CD4-positive, alpha-beta memory T cell (primary cell): ENCODE measurements at regions of chr6 and their contacts with region 1.

Region 1: GRCh38 chr6:33579828-33580714 is at the start of gene BAK1:
- DNase-seq: peak; percentile 78 to 89 (median 79)
- H3K4me3 ChIP-seq: peak within 1 kb of the TSS; percentile 88 to 98
- H3K4me3 Mint-ChIP-seq: peak within 1 kb of the TSS; percentile 93 to 100 (median 98)
- H3K27ac ChIP-seq: peak within 1 kb of the TSS; percentile 90
- H3K27ac Mint-ChIP-seq: peak within 1 kb of the TSS; percentile 98 to 100 (median 99)
- H3K4me1 ChIP-seq: peaks cover 31% of the 10 kb centered on the region
- H3K4me1 Mint-ChIP-seq: peaks cover 14 to 58% (median 32%) of the 10 kb centered on the region in 4 donors
- H3K27me3 ChIP-seq: no peaks in the 10 kb centered on the region
- H3K27me3 Mint-ChIP-seq: no peaks in the 10 kb centered on the region
- total RNA-seq, gene BAK1: 26.2 to 27.2 TPM

Region 2: GRCh38 chr6:33417903-33418689 is 162.0 kb before region 1 on chr6 and contains the start of gene CUTA:
- CTCF ChIA-PET with region 1: interaction called, 3 read pairs
- POLR2A ChIA-PET with region 1: interaction called, 16 read pairs
- intact Hi-C with region 1: no loop called
- DNase-seq: peak; percentile 97 to 100 (median 100)
- H3K4me3 ChIP-seq: peak within 1 kb of the TSS; percentile 82 to 94
- H3K4me3 Mint-ChIP-seq: peak within 1 kb of the TSS; percentile 87 to 97 (median 94)
- H3K27ac ChIP-seq: peak within 1 kb of the TSS; percentile 97
- H3K27ac Mint-ChIP-seq: peak within 1 kb of the TSS; percentile 99 to 100 (median 99)
- H3K4me1 ChIP-seq: peaks cover 72% of the 10 kb centered on the region
- H3K4me1 Mint-ChIP-seq: peaks cover 43 to 87% (median 61%) of the 10 kb centered on the region in 4 donors
- H3K27me3 ChIP-seq: no peaks in the 10 kb centered on the region
- H3K27me3 Mint-ChIP-seq: no peaks in the 10 kb centered on the region
- total RNA-seq, gene CUTA: 210 to 217 TPM

Region 3: GRCh38 chr6:33454009-33454946 is 125.8 kb before region 1 on chr6 and contains the start of gene ZBTB9:
- CTCF ChIA-PET with region 1: interaction called, 4 read pairs
- POLR2A ChIA-PET with region 1: interaction called, 24 read pairs
- intact Hi-C with region 1: no loop called
- DNase-seq: peak; percentile 92 to 96 (median 92)
- H3K4me3 ChIP-seq: peak within 1 kb of the TSS; percentile 84 to 89
- H3K4me3 Mint-ChIP-seq: peak within 1 kb of the TSS; percentile 93 to 99 (median 97)
- H3K27ac ChIP-seq: peak within 1 kb of the TSS; percentile 78
- H3K27ac Mint-ChIP-seq: peak within 1 kb of the TSS; percentile 82 to 98 (median 95)
- H3K4me1 ChIP-seq: peaks cover 29% of the 10 kb centered on the region
- H3K4me1 Mint-ChIP-seq: peaks cover 14 to 43% (median 29%) of the 10 kb centered on the region in 4 donors
- H3K27me3 ChIP-seq: no peaks in the 10 kb centered on the region
- H3K27me3 Mint-ChIP-seq: no peaks in the 10 kb centered on the region
- total RNA-seq, gene ZBTB9: 12.1 to 12.8 TPM

Region 4: GRCh38 chr6:33535104-33535603 is 44.9 kb before region 1 on chr6:
- CTCF ChIA-PET with region 1: interaction called, 5 read pairs
- POLR2A ChIA-PET with region 1: interaction called, 9 read pairs
- intact Hi-C with region 1: loop called (anchors 1 kb)
- DNase-seq: no peak
- H3K4me3 ChIP-seq: no peak overlapping the region
- H3K4me3 Mint-ChIP-seq: no peak overlapping the region
- H3K27ac ChIP-seq: no peak overlapping the region
- H3K27ac Mint-ChIP-seq: no peak overlapping the region
- H3K4me1 ChIP-seq: peaks cover 7% of the 10 kb centered on the region
- H3K4me1 Mint-ChIP-seq: peaks cover 11 to 25% (median 18%) of the 10 kb centered on the region in 4 donors
- H3K27me3 ChIP-seq: no peaks in the 10 kb centered on the region
- H3K27me3 Mint-ChIP-seq: no peaks in the 10 kb centered on the region

Region 5: GRCh38 chr6:33592411-33593054 is 12.5 kb after region 1 on chr6:
- CTCF ChIA-PET with region 1: interaction called, 10 read pairs
- POLR2A ChIA-PET with region 1: interaction called, 16 read pairs
- intact Hi-C with region 1: no loop called
- DNase-seq: peak; percentile 41 to 73 (median 44)
- H3K4me3 ChIP-seq: peak overlapping the region; percentile 6 to 52
- H3K4me3 Mint-ChIP-seq: peak overlapping the region; percentile 67 to 91 (median 86)
- H3K27ac ChIP-seq: peak overlapping the region; percentile 17
- H3K27ac Mint-ChIP-seq: peak overlapping the region; percentile 75 to 96 (median 92)
- H3K4me1 ChIP-seq: peaks cover 14% of the 10 kb centered on the region
- H3K4me1 Mint-ChIP-seq: peaks cover 12 to 23% (median 17%) of the 10 kb centered on the region in 4 donors
- H3K27me3 ChIP-seq: no peaks in the 10 kb centered on the region
- H3K27me3 Mint-ChIP-seq: no peaks in the 10 kb centered on the region

Region 6: DNA sequence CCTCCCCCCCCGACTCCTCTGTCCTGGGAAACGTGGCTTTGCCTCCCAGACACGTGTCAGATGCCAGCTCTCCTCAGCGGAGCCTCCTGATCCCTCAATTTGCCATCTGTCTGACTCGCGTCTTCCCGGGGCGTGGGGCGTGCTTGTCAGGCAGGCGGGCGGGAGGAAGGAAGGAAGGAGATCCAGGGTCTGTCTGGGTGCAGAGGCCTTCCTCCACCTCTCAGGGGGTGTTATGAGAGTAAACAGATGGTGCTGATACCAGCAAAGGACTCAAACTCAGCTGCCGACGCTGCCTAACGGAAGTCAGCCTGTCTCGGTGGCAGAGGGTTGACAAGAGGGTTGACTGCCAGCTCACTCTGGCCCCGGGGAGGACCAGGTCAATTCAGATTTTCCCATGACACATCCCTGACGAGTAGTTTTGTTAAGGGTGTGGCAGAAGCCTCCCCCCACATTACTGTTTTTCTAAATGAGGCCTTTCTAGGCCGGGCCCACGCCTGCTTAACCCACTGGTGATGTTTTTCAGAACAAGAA is 114.4 kb after region 1 on chr6:
- CTCF ChIA-PET with region 1: interaction called, 19 read pairs
- POLR2A ChIA-PET with region 1: interaction called, 13 read pairs
- intact Hi-C with region 1: no loop called
- DNase-seq: peak; percentile 58 to 86 (median 67)
- H3K4me3 ChIP-seq: no peak overlapping the region
- H3K4me3 Mint-ChIP-seq: peak overlapping the region in 7 of 8 donors; percentile 69 to 89 (median 69)
- H3K27ac ChIP-seq: peak overlapping the region; percentile 76
- H3K27ac Mint-ChIP-seq: peak overlapping the region; percentile 97 to 99 (median 98)
- H3K4me1 ChIP-seq: peaks cover 65% of the 10 kb centered on the region
- H3K4me1 Mint-ChIP-seq: peaks cover 36 to 84% (median 59%) of the 10 kb centered on the region in 4 donors
- H3K27me3 ChIP-seq: no peaks in the 10 kb centered on the region
- H3K27me3 Mint-ChIP-seq: no peaks in the 10 kb centered on the region

Region 7: DNA sequence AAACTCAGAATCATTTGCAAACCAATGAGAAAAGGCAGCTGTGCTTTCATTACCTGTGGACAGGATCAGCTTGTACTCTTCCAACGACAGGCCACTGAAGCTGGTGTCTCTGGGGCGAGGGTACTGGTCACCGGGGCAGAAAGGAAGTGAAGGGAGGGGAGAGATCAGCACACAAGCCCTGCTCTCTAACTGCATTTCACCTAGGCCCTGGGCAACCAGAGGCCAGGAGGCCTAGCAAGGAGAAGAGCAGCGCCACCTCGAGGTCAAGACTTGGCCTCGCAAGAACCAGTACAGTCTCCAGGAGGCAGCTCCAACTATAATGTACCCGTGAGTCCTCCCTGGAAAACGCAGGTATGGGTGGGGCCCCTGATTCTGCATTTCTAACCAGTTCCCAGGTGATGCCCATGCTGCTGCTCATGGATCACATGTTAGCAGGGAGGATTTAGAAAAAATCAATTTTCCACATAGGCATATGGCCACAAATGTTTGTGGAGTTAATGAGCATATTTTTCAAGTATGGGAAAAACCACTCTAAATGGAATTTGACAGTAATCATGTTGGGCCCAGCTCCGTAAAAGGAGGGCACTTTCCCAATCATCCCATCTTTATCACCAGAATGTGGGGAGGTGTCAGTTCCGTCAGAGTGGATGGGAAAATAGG is 120.5 kb after region 1 on chr6:
- CTCF ChIA-PET with region 1: interaction called, 77 read pairs
- POLR2A ChIA-PET with region 1: interaction called, 6 read pairs
- intact Hi-C with region 1: loop called (anchors 1 kb)
- DNase-seq: peak; percentile 69 to 77 (median 71)
- H3K4me3 ChIP-seq: no peak overlapping the region
- H3K4me3 Mint-ChIP-seq: peak overlapping the region in 1 of 8 donors; percentile 53
- H3K27ac ChIP-seq: peak overlapping the region; percentile 12
- H3K27ac Mint-ChIP-seq: peak overlapping the region; percentile 35 to 93 (median 90)
- H3K4me1 ChIP-seq: peaks cover 32% of the 10 kb centered on the region
- H3K4me1 Mint-ChIP-seq: peaks cover 21 to 49% (median 33%) of the 10 kb centered on the region in 4 donors
- H3K27me3 ChIP-seq: no peaks in the 10 kb centered on the region
- H3K27me3 Mint-ChIP-seq: no peaks in the 10 kb centered on the region